ENCODE measurements at regions of chr6 and their contacts with region 1.

Region 1: DNA sequence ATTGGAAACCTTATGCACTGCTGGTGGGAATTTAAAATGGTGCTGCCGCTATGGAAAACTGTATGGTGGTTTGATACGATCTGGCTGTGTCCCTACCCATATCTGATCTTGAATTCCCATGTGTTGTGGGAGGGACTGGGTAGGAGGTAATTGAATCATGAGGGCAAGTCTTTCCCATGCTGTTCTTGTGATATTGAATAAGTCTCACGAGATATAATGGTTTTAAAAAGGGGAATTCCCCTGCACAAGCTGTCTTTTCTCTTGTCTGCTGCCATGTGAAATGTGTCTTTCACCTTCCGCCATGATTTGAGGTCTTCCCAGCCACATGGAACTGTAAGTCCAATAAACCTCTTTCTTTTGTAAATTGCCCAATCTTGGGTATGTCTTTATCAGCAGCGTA is 4.9 kb downstream of the TAP2 start:
- DNase-seq: no peak
- ATAC-seq: no peak

Region 2: DNA sequence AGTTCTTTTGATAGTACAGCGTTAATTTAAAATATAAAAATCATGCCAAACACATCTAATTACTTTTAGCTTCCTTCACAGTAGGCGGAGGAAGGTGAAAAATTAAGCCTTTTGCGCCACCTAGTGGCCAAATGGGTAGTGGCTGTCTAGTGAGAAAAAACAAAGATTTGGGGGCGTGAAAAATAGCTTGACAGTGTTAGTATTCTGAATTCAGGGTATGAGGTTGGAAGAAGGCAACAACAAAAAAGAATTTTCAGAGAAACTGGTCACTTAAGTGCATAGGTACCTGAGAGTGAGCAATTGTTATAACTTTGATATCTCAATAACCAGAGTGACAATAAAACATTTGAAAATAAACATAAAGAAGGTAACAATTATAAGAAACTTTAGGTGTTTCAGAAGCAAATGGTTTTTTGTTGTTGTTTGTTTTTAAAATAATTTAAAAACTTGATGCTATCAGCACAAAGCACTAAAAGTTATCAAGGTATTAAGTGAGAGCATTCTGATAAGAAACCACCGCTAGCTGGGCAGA is 34.7 kb after region 1 on chr6:
- intact Hi-C with region 1: loop called in 1 of 2 experiments (anchors 5 kb)
- DNase-seq: peak; percentile 52 to 92
- ATAC-seq: peak; percentile 80